ENCODE measurements at regions of chr1 and their contacts with region 1.

Region 1: GRCh38 chr1:40003156-40004148 is 37.1 kb upstream of the CAP1 start:
- DNase-seq: no peak
- ATAC-seq: peak; percentile 82
- H3K4me3 Mint-ChIP-seq: peak overlapping the region; percentile 67
- H3K27ac Mint-ChIP-seq: peak overlapping the region; percentile 59
- H3K4me1 Mint-ChIP-seq: peaks cover 63% of the 10 kb centered on the region
- H3K27me3 Mint-ChIP-seq: no peaks in the 10 kb centered on the region
- CTCF ChIP-seq: no peak

Region 2: GRCh38 chr1:39408641-39409054 is 594.8 kb before region 1 on chr1:
- CTCF ChIA-PET with region 1: no interaction called
- POLR2A ChIA-PET with region 1: no interaction called
- intact Hi-C with region 1: no loop called
- DNase-seq: peak; percentile 74
- ATAC-seq: peak; percentile 84
- H3K4me3 Mint-ChIP-seq: peak overlapping the region; percentile 88
- H3K27ac Mint-ChIP-seq: no peak overlapping the region
- H3K4me1 Mint-ChIP-seq: peaks cover 28% of the 10 kb centered on the region
- H3K27me3 Mint-ChIP-seq: no peaks in the 10 kb centered on the region
- CTCF ChIP-seq: no peak

Region 3: GRCh38 chr1:40014812-40015594 is 11.6 kb after region 1 on chr1:
- CTCF ChIA-PET with region 1: no interaction called
- POLR2A ChIA-PET with region 1: interaction called, 4 read pairs
- intact Hi-C with region 1: loop called (anchors 1 kb)
- DNase-seq: no peak
- ATAC-seq: no peak
- H3K4me3 Mint-ChIP-seq: no peak overlapping the region
- H3K27ac Mint-ChIP-seq: no peak overlapping the region
- H3K4me1 Mint-ChIP-seq: peaks cover 15% of the 10 kb centered on the region
- H3K27me3 Mint-ChIP-seq: no peaks in the 10 kb centered on the region
- CTCF ChIP-seq: no peak

Region 4: GRCh38 chr1:40167317-40167716 is 163.9 kb after region 1 on chr1:
- CTCF ChIA-PET with region 1: no interaction called
- POLR2A ChIA-PET with region 1: no interaction called
- intact Hi-C with region 1: no loop called
- DNase-seq: no peak
- ATAC-seq: no peak
- H3K4me3 Mint-ChIP-seq: no peak overlapping the region
- H3K27ac Mint-ChIP-seq: no peak overlapping the region
- H3K4me1 Mint-ChIP-seq: peaks cover 39% of the 10 kb centered on the region
- H3K27me3 Mint-ChIP-seq: no peaks in the 10 kb centered on the region
- CTCF ChIP-seq: no peak

Region 5: GRCh38 chr1:40221977-40222772 is 218.7 kb after region 1 on chr1:
- CTCF ChIA-PET with region 1: no interaction called
- POLR2A ChIA-PET with region 1: no interaction called
- intact Hi-C with region 1: no loop called
- DNase-seq: no peak
- ATAC-seq: no peak
- H3K4me3 Mint-ChIP-seq: no peak overlapping the region
- H3K27ac Mint-ChIP-seq: peak overlapping the region; percentile 24
- H3K4me1 Mint-ChIP-seq: no peaks in the 10 kb centered on the region
- H3K27me3 Mint-ChIP-seq: no peaks in the 10 kb centered on the region
- CTCF ChIP-seq: no peak

Measured in activated B cell treated with CpG ODN at 0.5 μM for 24 hours (primary cell).